Activated T-helper 1 cell treated with anti-CD3 and anti-CD28 coated beads, Interleukin-12 subunit alpha, Interleukin-12 subunit beta, Interleukin-2, Interleukin-4 antibody, amounts not matched to agents 30 ng/mL and 10 ng/mL and 1 ng/mL, durations not matched to agents 14 hours and 24 hours and 36 hours (primary cell): ENCODE measurements at regions of chr19 and their contacts with region 1.

Region 1: GRCh38 chr19:3075895-3076431 is 13.7 kb upstream of the TLE5 start:
- DNase-seq: peak; percentile 54
- H3K4me3 Mint-ChIP-seq: no peak overlapping the region
- H3K27ac Mint-ChIP-seq: no peak overlapping the region
- H3K4me1 Mint-ChIP-seq: no peaks in the 10 kb centered on the region
- H3K27me3 Mint-ChIP-seq: peaks cover 7% of the 10 kb centered on the region

Region 2: GRCh38 chr19:3108775-3109174 is 32.8 kb after region 1 on chr19:
- intact Hi-C with region 1: loop called (anchors 1 kb)
- DNase-seq: peak; percentile 45
- H3K4me3 Mint-ChIP-seq: no peak overlapping the region
- H3K27ac Mint-ChIP-seq: peak overlapping the region; percentile 49
- H3K4me1 Mint-ChIP-seq: peaks cover 5% of the 10 kb centered on the region
- H3K27me3 Mint-ChIP-seq: peaks cover 3% of the 10 kb centered on the region

Region 3: DNA sequence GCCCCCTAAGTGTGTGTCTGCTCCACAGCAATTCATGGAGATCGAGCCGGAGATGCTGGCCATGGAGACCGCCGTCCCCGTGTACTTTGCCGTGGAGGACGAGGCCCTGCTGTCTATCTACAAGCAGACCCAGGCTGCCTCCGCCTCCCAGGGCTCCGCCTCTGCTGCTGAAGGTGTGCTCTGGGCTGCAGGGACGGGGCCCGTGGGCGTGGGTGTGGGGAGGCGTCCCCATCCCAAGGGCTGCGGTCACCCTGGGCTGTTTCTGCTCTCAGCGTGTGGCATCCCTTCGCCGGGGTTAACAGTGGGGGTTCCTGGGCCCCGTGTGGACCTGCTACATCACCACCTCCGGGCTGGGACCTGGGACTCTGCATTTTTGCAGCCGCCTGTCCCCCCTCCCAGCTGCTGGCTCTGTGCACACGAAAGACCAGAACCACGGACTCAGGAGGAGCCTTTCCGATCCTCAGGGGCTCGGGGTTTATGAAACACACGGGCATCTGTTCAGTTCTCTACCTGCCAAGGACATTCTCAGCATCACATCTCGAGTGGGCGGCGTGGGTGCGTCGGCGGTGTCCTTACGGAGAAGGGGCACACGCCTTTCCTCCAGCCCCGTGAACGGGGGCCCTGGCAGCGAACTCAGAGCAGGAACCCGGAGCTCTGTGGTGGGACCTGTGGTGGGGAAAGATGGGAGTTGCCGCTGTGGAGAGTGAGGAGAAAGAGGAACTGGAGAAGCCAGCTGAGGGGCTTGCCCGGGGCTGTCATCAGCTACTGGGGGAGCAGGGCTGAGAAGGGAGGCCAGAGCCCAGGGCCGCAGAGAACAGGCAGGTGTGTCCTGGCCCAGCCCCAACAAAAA is 117.5 kb after region 1 on chr19:
- intact Hi-C with region 1: no loop called
- DNase-seq: no peak
- H3K4me3 Mint-ChIP-seq: no peak overlapping the region
- H3K27ac Mint-ChIP-seq: no peak overlapping the region
- H3K4me1 Mint-ChIP-seq: peaks cover 7% of the 10 kb centered on the region
- H3K27me3 Mint-ChIP-seq: no peaks in the 10 kb centered on the region

Region 4: DNA sequence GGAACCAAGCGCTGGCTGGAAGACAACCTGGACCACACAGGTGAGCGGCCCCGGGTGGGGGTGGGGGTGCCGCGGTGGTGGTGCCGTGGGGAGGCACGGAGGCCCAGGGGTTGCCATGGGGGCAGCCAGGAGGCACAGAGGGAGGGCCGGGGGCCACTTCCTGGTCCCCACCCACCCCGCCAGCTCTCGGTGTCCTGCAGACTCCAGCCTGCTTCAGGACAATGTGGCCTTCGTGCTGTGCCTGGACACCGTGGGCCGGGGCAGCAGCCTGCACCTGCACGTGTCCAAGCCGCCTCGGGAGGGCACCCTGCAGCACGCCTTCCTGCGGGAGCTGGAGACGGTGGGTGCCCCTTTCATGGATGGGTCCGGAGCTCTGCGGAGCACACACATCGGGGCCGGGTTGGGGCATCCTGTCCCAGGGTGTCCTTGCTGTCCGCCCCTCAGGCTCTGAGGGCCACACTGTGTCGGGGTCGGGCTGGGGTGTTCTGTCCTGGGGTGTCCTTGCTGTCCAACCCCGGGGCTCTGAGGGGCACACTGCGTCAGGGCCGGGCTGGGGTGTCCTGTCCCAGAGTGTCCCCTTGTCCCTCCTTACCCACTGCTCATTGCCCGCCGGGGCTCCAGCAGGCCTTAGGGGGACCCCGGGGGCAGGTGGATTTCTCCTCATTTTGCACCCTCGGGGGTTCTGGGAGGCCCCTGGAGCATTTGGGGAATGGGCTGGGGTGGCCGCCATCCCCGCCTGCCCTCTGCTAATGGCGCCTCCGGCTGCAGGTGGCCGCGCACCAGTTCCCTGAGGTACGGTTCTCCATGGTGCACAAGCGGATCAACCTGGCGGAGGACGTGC is 128.1 kb after region 1 on chr19:
- intact Hi-C with region 1: no loop called
- DNase-seq: no peak
- H3K4me3 Mint-ChIP-seq: no peak overlapping the region
- H3K27ac Mint-ChIP-seq: no peak overlapping the region
- H3K4me1 Mint-ChIP-seq: no peaks in the 10 kb centered on the region
- H3K27me3 Mint-ChIP-seq: no peaks in the 10 kb centered on the region